ENCODE measurements at regions of chr9 and their contacts with region 1.

Region 1: GRCh38 chr9:21110708-21111576 is 30.7 kb downstream of the IFNW1 start:
- DNase-seq: peak; percentile 70
- ATAC-seq: peak; percentile 100
- H3K4me3 ChIP-seq: no peak overlapping the region
- H3K27ac ChIP-seq: no peak overlapping the region
- H3K4me1 ChIP-seq: no peaks in the 10 kb centered on the region
- H3K27me3 ChIP-seq: peaks cover 4% of the 10 kb centered on the region; the same call in 1 of the 2 replicates
- CTCF ChIP-seq: peak; percentile 62 to 93 (median 75); a peak in 5 of 6 replicates
- POLR2A ChIP-seq: no peak
- RAD21 ChIP-seq: peak; percentile 88

Region 2: DNA sequence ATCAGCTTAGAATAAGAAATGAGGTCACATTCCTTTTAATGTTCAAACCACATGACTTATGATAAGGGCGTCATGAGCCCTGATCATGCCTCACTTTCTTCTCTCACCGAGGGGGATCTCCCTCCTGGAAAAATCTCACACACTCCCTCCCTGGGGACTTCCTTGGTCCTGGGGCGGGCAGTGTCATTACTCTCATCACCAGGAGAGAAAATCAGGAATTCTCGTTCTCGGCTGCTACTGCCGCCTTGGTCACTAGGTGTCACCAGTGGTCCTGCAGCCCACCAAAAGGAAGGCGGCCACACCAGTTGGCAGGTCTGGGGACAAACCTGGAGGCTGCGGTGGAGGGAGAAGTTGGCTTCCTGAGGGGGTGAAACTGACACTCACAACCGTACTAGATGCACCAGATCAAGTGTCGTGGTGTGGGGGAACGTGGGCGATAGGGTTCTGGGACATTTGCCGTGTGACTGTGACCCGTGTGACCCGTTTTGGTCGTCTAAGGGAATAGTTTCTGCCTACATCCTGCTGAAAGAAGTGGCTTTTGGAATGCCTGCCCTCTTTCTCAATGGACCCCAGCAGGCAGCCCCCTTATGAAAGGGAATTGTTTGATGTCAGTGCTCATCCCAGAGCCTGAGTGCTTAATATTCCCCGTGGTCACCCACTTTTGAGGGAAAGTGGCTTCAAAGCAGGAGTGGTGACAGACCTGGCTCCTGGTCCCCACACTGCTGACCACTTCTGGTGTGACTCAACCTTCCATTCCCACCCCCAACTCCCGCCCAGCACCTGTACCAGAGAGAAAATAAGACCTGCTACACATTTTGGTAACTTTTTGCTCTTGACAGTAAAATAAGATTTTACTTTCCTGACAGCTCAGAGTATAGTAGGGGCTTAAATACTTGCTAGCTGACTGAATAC is 1638.9 kb before region 1 on chr9:
- CTCF ChIA-PET with region 1: interaction called, 4 read pairs
- POLR2A ChIA-PET with region 1: no interaction called
- RAD21 ChIA-PET with region 1: no interaction called
- intact Hi-C with region 1: loop called (anchors 10 kb)
- DNase-seq: peak; percentile 48
- ATAC-seq: peak; percentile 97
- H3K4me3 ChIP-seq: peak overlapping the region; percentile 20 to 31
- H3K27ac ChIP-seq: no peak overlapping the region
- H3K4me1 ChIP-seq: peaks cover 4 to 8% of the 10 kb centered on the region in 2 experiments; a peak in 3 of 4 replicates
- H3K27me3 ChIP-seq: no peaks in the 10 kb centered on the region
- CTCF ChIP-seq: peak; percentile 55 to 92 (median 83); a peak in 5 of 6 replicates
- POLR2A ChIP-seq: no peak
- RAD21 ChIP-seq: peak; percentile 84

Region 3: DNA sequence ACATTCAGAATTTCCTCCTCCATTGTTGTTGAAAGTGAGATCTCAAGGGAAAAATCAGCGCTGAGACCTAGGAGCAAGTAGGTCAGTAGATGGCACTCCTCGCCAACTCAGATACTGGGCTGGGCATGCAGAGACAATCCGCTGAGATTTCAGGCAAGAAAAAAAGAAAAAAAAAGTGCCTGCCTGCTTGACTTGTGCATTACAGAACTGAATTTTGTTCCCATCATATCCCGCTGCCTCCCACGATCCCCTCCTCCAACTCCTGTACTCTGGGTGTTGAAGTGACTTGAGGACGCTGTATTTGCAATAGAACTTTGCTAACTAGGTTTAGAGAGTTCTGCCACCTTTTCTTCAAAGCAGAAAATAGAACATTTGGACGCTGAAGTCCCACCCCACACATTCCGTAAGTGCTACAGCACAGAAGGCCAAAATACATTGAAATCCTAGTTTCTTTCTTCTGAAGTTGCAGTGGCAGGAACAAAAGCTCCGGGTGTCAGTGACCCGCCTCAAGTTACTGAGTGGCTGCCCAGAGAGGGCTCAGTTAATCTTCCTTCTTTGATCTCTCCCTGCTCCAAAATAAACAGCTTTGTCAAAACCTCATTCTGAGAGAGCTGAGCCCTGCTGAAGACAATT is 754.4 kb before region 1 on chr9:
- CTCF ChIA-PET with region 1: interaction called, 11 read pairs
- POLR2A ChIA-PET with region 1: no interaction called
- RAD21 ChIA-PET with region 1: no interaction called
- intact Hi-C with region 1: loop called (anchors 1 kb)
- DNase-seq: peak; percentile 43
- ATAC-seq: peak; percentile 91
- H3K4me3 ChIP-seq: no peak overlapping the region
- H3K27ac ChIP-seq: no peak overlapping the region
- H3K4me1 ChIP-seq: no peaks in the 10 kb centered on the region
- H3K27me3 ChIP-seq: peaks cover 5% of the 10 kb centered on the region; the same call in 1 of the 2 replicates
- CTCF ChIP-seq: peak; percentile 49 to 66 (median 62); a peak in 5 of 6 replicates
- POLR2A ChIP-seq: no peak
- RAD21 ChIP-seq: peak; percentile 85

Region 4: DNA sequence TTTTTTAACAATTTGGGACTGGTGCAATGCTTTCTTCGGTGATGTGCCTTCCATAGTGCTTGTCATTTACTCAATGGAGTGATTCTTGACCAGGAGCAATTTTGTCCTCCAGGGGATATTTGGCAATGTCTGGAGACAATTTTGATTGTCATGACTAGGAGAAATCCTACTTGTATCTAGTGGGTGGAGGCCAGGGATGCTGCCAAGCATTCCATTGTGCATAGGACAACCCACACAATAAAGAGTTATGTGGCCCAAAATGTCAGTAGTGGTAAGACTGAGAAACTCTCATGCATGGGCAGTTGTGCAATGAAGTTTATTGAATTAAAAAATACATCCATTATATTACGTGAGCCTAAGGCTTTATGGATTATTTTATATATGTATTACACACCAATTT is 356.4 kb before region 1 on chr9:
- CTCF ChIA-PET with region 1: no interaction called
- POLR2A ChIA-PET with region 1: no interaction called
- RAD21 ChIA-PET with region 1: no interaction called
- intact Hi-C with region 1: no loop called
- DNase-seq: no peak
- ATAC-seq: no peak
- H3K4me3 ChIP-seq: no peak overlapping the region
- H3K27ac ChIP-seq: no peak overlapping the region
- H3K4me1 ChIP-seq: peaks cover 20 to 28% of the 10 kb centered on the region in 2 experiments
- H3K27me3 ChIP-seq: no peaks in the 10 kb centered on the region
- CTCF ChIP-seq: no peak
- POLR2A ChIP-seq: no peak
- RAD21 ChIP-seq: no peak

Region 5: GRCh38 chr9:20884985-20885593 is 225.9 kb before region 1 on chr9:
- CTCF ChIA-PET with region 1: interaction called, 32 read pairs
- POLR2A ChIA-PET with region 1: interaction called, 3 read pairs
- RAD21 ChIA-PET with region 1: no interaction called
- intact Hi-C with region 1: loop called (anchors 2 kb)
- DNase-seq: peak; percentile 12
- ATAC-seq: peak; percentile 63; the same call in 1 of the 2 replicates
- H3K4me3 ChIP-seq: no peak overlapping the region
- H3K27ac ChIP-seq: no peak overlapping the region
- H3K4me1 ChIP-seq: no peaks in the 10 kb centered on the region
- H3K27me3 ChIP-seq: no peaks in the 10 kb centered on the region
- CTCF ChIP-seq: peak in 2 of 3 experiments; percentile 60 to 65; a peak in 4 of 6 replicates
- POLR2A ChIP-seq: no peak
- RAD21 ChIP-seq: peak; percentile 38

Region 6: GRCh38 chr9:21078717-21079116 is 32.2 kb before region 1 on chr9:
- CTCF ChIA-PET with region 1: interaction called, 11 read pairs
- POLR2A ChIA-PET with region 1: no interaction called
- RAD21 ChIA-PET with region 1: interaction called in 1 of 2 experiments, 3 read pairs
- intact Hi-C with region 1: no loop called
- DNase-seq: no peak
- ATAC-seq: peak; percentile 82
- H3K4me3 ChIP-seq: no peak overlapping the region
- H3K27ac ChIP-seq: no peak overlapping the region
- H3K4me1 ChIP-seq: no peaks in the 10 kb centered on the region; a peak in 1 of 4 replicates
- H3K27me3 ChIP-seq: no peaks in the 10 kb centered on the region
- CTCF ChIP-seq: peak; percentile 9 to 37 (median 30); a peak in 2 of 6 replicates
- POLR2A ChIP-seq: no peak
- RAD21 ChIP-seq: peak; percentile 30

Measured in HCT116 (cell line).